GM23248 (cell line): ENCODE measurements at regions of chr4 and their contacts with region 1.

Region 1: GRCh38 chr4:173505924-173506518 is 24.0 kb downstream of the HAND2 start:
- DNase-seq: peak; percentile 77
- H3K4me3 ChIP-seq: no peak overlapping the region
- H3K27ac ChIP-seq: no peak overlapping the region
- H3K4me1 ChIP-seq: no peaks in the 10 kb centered on the region
- H3K27me3 ChIP-seq: no peaks in the 10 kb centered on the region

Region 2: DNA sequence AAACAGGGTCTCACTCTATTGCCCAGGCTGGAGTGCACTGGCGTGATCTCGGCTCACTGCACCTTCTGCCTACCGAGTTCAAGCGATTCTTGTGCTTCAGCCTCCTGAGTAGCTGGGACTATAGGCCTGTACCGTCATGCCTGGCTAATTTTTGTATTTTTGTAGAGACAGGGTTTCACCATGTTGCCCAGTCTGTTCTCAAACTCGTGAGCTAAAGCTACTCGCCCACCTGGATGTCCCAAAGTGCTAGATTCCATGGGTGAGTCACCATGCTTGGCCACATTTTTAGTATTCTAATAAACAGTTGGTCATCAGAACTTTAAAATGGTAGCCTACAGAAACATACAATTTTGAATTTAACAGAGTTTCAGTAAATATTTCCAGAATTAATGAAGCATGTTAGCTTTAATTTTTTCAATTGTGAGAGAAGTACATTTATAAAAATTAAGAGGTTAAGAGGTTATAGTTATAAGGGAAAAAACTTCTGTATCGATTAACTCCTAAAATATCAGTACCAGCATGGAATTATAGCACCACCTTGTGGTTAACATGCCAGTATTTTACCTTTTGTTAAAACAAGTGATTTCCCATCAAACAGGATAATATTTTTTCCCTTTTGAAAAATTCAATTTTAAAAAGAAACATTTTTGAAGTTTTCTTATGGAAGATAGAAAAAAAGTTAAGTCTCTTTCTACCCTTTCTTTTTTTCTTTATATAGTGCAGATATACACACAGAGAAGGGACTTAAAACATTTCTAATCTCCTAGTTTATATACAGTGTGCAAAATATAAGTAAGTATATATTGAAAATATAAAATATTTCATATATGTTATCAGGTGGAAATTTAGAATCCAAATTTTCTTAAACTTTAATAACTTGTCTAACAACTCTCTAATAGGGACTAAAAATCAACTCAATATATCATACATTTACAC is 813.1 kb after region 1 on chr4:
- in situ Hi-C with region 1: loop called (anchors 25 kb)
- DNase-seq: peak; percentile 50
- H3K4me3 ChIP-seq: no peak overlapping the region
- H3K27ac ChIP-seq: no peak overlapping the region
- H3K4me1 ChIP-seq: peaks cover 34% of the 10 kb centered on the region
- H3K27me3 ChIP-seq: no peaks in the 10 kb centered on the region